Dendritic cell treated with granulocyte-macrophage colony-stimulating factor and Interleukin-4, amounts not matched to agents 40 ng/mL and 50 ng/mL, for 4 days (primary cell): ENCODE measurements at regions of chr10 and their contacts with region 1.

Region 1: DNA sequence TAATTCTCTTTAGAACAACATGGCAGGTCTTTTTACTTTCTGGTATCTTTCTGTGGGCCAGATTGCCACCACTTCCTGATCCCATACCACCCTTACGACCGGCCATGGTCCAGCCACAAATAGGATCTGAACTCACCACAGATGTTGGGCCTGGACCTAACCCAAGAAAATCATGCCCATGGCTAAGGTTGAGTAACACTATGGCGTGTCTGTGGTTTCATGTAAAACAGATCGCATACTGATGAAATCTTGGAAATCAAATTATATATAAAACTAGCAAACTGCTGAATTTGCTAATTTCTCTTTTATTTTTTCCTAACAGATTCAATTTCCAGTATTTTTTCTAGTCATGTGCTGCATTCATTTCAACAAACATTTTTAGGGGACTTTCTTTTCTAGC is 77.2 kb downstream of the CH25H start:
- H3K4me3 Mint-ChIP-seq: no peak overlapping the region
- H3K27ac Mint-ChIP-seq: peak overlapping the region; percentile 32
- H3K4me1 Mint-ChIP-seq: peaks cover 9% of the 10 kb centered on the region
- H3K27me3 Mint-ChIP-seq: peaks cover 9% of the 10 kb centered on the region

Region 2: DNA sequence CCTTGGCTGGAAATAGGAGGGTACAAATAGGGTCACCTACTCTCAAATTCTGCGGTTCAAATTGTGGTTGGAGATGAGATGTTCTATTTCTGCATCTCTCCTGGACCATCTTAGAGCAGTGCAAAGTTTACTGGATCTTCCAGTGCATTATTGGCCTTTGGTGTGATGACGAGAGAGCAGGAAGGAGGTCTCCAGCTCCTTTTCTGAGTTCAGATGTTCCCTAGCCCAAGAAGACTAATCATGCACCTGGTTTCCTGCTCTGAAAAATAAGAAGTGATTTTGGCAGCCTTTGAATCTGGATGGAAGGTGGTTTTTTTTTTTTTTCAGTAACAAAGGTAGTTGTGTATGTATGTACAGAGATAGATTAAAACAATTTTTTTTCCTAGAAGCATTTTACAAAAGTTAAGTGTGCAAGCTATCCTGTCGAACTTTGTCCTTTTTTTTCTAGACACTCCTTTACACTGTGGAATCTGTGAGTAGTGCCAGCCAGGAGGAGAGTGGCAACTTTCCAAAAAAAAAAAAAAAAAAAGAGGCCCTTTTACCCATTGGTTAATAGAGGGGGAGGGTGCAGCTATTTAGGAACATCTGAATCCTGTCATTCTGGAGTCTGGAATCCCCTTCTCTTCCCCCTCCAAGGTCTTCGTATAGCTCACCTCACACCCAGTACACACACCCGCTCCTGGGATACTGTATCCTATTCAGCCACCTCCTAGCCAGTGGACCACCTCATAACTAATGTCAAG is 1443.9 kb before region 1 on chr10:
- intact Hi-C with region 1: no loop called
- H3K4me3 Mint-ChIP-seq: no peak overlapping the region
- H3K27ac Mint-ChIP-seq: no peak overlapping the region
- H3K4me1 Mint-ChIP-seq: no peaks in the 10 kb centered on the region
- H3K27me3 Mint-ChIP-seq: no peaks in the 10 kb centered on the region

Region 3: DNA sequence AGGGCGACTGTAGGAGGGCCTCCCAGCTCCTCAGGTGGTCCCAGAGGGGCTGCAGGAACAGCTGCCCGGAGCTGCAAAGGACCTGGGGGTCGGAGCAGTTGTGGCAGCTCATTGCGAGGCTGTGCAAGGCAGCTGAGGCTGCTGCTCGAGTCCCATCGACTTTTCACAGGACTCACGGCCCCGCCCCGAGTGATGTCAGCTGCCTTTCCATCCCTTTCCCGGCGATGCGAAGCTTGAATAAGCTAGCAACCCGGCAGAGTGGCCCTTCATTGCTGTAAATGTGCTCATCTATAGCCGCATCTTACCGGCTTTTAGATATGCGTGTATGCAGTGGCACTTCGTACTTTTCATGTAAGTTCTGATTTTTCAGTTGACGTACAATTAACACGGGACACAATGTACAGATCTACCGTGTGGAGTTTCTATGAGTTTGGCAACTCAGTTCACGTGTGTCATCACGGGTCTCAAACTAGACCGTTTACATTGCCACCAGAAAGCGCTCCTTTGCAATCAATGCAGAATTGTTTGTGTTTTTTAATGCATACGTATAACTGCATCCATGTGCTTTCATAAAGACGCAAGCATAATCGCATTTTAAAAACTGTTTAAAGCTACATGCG is 77.4 kb after region 1 on chr10 and contains the start of gene CH25H:
- intact Hi-C with region 1: loop called (anchors 10 kb)
- H3K4me3 Mint-ChIP-seq: peak within 1 kb of the TSS; percentile 79
- H3K27ac Mint-ChIP-seq: peak within 1 kb of the TSS; percentile 80
- H3K4me1 Mint-ChIP-seq: peaks cover 30% of the 10 kb centered on the region
- H3K27me3 Mint-ChIP-seq: peaks cover 48% of the 10 kb centered on the region